ENCODE measurements at regions of chr6 and their contacts with region 1.

Region 1: DNA sequence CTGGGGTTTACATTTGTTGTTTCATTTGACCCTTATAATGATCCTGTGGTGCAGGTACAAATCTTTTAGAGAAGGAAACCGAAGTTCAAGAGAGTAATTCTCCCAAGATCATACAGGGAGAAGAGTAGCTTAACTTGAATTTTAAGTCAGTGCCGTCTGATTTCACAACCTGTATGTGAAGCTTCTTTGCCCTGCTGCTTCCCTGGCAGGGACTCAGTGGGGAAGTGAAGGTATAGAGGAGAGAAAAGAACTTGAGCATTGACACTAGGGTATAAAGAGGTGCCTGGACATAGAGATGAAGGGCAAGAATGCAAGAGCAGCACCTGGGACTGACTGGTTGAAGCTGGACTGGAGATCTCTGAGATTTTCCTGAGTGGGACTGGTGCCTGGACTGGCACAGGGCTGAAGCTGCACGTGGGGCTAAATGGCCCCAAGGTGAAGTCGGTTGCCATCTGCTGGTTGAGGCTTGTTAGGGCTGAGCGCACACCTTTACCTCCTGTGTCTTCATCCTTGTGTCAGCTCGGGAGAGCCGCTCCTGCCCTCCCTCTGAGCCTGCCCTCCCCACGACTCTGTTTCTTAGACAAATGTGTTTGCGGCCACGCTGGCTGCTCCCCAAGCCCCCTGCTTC is 41.8 kb downstream of the FARS2 start:
- DNase-seq: peak; percentile 79
- ATAC-seq: peak; percentile 85
- H3K4me3 ChIP-seq: peak overlapping the region in 3 of 5 experiments; percentile 1 to 41 (median 22)
- H3K4me3 Mint-ChIP-seq: peak overlapping the region; percentile 79
- H3K27ac ChIP-seq: peak overlapping the region in 1 of 2 donors; percentile 30
- H3K27ac Mint-ChIP-seq: peak overlapping the region; percentile 81
- H3K4me1 ChIP-seq: peaks cover 10 to 18% of the 10 kb centered on the region in 2 donors
- H3K4me1 Mint-ChIP-seq: peaks cover 35% of the 10 kb centered on the region
- H3K27me3 ChIP-seq: no peaks in the 10 kb centered on the region
- H3K27me3 Mint-ChIP-seq: no peaks in the 10 kb centered on the region
- CTCF ChIP-seq: peak; percentile 78

Region 2: GRCh38 chr6:5115168-5115567 is 187.9 kb before region 1 on chr6:
- CTCF ChIA-PET with region 1: no interaction called
- POLR2A ChIA-PET with region 1: no interaction called
- intact Hi-C with region 1: no loop called
- DNase-seq: no peak
- ATAC-seq: no peak
- H3K4me3 ChIP-seq: no peak overlapping the region
- H3K4me3 Mint-ChIP-seq: no peak overlapping the region
- H3K27ac ChIP-seq: no peak overlapping the region
- H3K27ac Mint-ChIP-seq: no peak overlapping the region
- H3K4me1 ChIP-seq: no peaks in the 10 kb centered on the region
- H3K4me1 Mint-ChIP-seq: no peaks in the 10 kb centered on the region
- H3K27me3 ChIP-seq: no peaks in the 10 kb centered on the region
- H3K27me3 Mint-ChIP-seq: no peaks in the 10 kb centered on the region
- CTCF ChIP-seq: no peak

Region 3: DNA sequence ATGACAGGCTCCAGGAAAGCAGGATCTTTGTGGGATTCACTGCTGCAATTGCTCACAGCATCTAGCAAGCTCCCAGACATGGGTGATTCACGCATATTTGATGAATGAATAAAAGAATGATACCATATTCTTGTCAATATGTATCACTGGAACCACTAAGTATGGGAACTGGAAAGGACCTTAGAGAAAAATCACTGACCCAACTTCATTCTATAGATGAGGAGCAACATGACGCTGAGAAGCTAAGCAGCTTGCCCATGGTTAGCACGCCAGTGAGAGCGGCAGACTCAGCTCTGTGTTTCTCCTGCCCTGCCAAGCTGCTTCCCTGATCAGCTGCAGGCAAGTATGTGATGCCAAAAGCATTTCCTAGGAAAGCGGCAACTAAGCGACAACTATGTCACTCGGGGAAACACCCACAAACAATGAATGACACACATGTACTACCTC is 151.1 kb before region 1 on chr6:
- CTCF ChIA-PET with region 1: interaction called, 21 read pairs
- POLR2A ChIA-PET with region 1: no interaction called
- intact Hi-C with region 1: no loop called
- DNase-seq: no peak
- ATAC-seq: no peak
- H3K4me3 ChIP-seq: no peak overlapping the region
- H3K4me3 Mint-ChIP-seq: no peak overlapping the region
- H3K27ac ChIP-seq: no peak overlapping the region
- H3K27ac Mint-ChIP-seq: no peak overlapping the region
- H3K4me1 ChIP-seq: no peaks in the 10 kb centered on the region
- H3K4me1 Mint-ChIP-seq: no peaks in the 10 kb centered on the region
- H3K27me3 ChIP-seq: no peaks in the 10 kb centered on the region
- H3K27me3 Mint-ChIP-seq: no peaks in the 10 kb centered on the region
- CTCF ChIP-seq: no peak

Region 4: DNA sequence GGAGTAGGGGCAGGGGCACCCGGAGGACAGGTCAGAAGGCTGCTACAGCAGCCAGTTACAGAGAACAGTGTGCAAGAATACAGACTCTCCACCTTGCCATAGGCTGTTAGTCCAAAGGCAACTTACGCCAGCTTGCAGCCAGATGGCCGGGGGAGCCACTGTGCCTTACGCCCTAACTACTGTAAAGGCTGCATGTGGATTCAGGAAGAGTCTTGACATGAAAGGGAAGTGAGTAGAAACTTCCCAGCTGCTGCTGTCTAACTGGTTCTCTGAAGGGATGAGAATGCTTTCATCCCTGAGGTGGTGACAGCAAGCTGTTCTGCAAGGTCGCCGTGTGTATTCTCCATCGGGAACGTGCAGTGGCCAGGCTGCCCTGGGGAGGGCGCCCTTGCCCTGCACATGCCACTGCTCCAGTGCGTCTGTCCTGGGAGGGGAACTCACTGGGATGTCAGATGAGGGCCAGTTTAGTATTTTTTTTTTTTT is 88.5 kb before region 1 on chr6:
- CTCF ChIA-PET with region 1: interaction called, 52 read pairs
- POLR2A ChIA-PET with region 1: no interaction called
- intact Hi-C with region 1: loop called (anchors 1 kb)
- DNase-seq: peak; percentile 17
- ATAC-seq: no peak
- H3K4me3 ChIP-seq: no peak overlapping the region
- H3K4me3 Mint-ChIP-seq: no peak overlapping the region
- H3K27ac ChIP-seq: no peak overlapping the region
- H3K27ac Mint-ChIP-seq: no peak overlapping the region
- H3K4me1 ChIP-seq: no peaks in the 10 kb centered on the region
- H3K4me1 Mint-ChIP-seq: peaks cover 10% of the 10 kb centered on the region
- H3K27me3 ChIP-seq: no peaks in the 10 kb centered on the region
- H3K27me3 Mint-ChIP-seq: no peaks in the 10 kb centered on the region
- CTCF ChIP-seq: no peak

Region 5: GRCh38 chr6:5266423-5266822 is 36.7 kb before region 1 on chr6:
- CTCF ChIA-PET with region 1: interaction called, 16 read pairs
- POLR2A ChIA-PET with region 1: interaction called, 11 read pairs
- intact Hi-C with region 1: loop called (anchors 1 kb)
- DNase-seq: no peak
- ATAC-seq: no peak
- H3K4me3 ChIP-seq: no peak overlapping the region
- H3K4me3 Mint-ChIP-seq: no peak overlapping the region
- H3K27ac ChIP-seq: no peak overlapping the region
- H3K27ac Mint-ChIP-seq: peak overlapping the region; percentile 42
- H3K4me1 ChIP-seq: peaks cover 8 to 14% of the 10 kb centered on the region in 2 donors
- H3K4me1 Mint-ChIP-seq: peaks cover 15% of the 10 kb centered on the region
- H3K27me3 ChIP-seq: no peaks in the 10 kb centered on the region
- H3K27me3 Mint-ChIP-seq: no peaks in the 10 kb centered on the region
- CTCF ChIP-seq: no peak

Region 6: DNA sequence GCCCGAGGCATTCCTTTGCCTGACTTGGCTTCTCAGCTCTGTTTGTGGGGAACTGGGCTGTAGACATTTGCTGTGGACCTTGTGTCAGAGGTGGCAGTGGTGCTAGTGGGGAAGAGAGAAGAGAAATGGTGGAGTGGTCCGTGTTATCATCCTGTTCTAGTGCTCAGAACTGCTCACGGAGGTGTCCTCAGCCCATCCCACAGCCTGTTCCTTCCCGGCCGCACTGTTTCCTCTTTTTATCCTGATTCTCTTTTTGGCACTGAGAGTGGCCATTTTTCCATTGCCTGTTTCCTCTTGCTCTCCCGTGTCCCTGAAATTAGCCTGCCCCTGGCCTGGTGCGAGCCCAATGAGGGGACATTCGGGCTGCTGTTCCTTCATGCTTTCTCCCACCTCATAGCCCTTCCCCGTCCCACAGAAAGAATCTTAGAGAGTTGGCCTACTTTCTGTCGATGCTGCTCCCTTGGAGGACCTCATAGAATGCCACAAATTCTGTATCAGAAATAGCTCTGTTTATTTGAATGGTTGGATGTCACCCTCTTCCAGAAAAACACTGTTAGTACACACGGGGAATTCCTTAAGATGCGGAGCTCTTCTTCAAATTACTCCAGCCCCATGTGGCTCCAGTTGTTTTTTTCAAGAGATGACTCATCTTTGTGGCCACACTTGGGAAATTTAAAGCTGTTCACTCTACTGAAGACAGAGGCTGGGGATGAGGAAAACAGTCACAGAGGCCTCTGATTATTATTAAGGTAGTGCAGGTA is 15.7 kb before region 1 on chr6:
- CTCF ChIA-PET with region 1: interaction called, 22 read pairs
- POLR2A ChIA-PET with region 1: interaction called, 3 read pairs
- intact Hi-C with region 1: no loop called
- DNase-seq: no peak
- ATAC-seq: no peak
- H3K4me3 ChIP-seq: no peak overlapping the region
- H3K4me3 Mint-ChIP-seq: no peak overlapping the region
- H3K27ac ChIP-seq: no peak overlapping the region
- H3K27ac Mint-ChIP-seq: peak overlapping the region; percentile 11
- H3K4me1 ChIP-seq: peaks cover 22 to 27% of the 10 kb centered on the region in 2 donors
- H3K4me1 Mint-ChIP-seq: peaks cover 64% of the 10 kb centered on the region
- H3K27me3 ChIP-seq: no peaks in the 10 kb centered on the region
- H3K27me3 Mint-ChIP-seq: no peaks in the 10 kb centered on the region
- CTCF ChIP-seq: no peak